ENCODE measurements at regions of chr3 and their contacts with region 1.

Region 1: GRCh38 chr3:51670823-51671733 is at the start of gene TEX264:
- DNase-seq: peak; percentile 93
- H3K4me3 ChIP-seq: peak within 1 kb of the TSS; percentile 70 to 94 (median 86)
- H3K27ac ChIP-seq: peak within 1 kb of the TSS; percentile 89 to 94 (median 92)
- H3K4me1 ChIP-seq: peaks cover 0 to 48% (median 34%) of the 10 kb centered on the region in 4 donors
- H3K27me3 ChIP-seq: no peaks in the 10 kb centered on the region
- CTCF ChIP-seq: no peak
- EP300 ChIP-seq: no peak
- POLR2A ChIP-seq: peak; percentile 59 to 63
- total RNA-seq, gene TEX264: 43.2 to 72.4 (median 70.2) TPM

Region 2: GRCh38 chr3:51384726-51385473 is 286.2 kb before region 1 on chr3 and contains the start of gene MANF:
- intact Hi-C with region 1: loop called (anchors 5 kb)
- DNase-seq: peak; percentile 99
- H3K4me3 ChIP-seq: peak within 1 kb of the TSS; percentile 59 to 91 (median 83)
- H3K27ac ChIP-seq: peak within 1 kb of the TSS; percentile 84 to 96 (median 92)
- H3K4me1 ChIP-seq: peaks cover 0 to 42% (median 35%) of the 10 kb centered on the region in 4 donors
- H3K27me3 ChIP-seq: no peaks in the 10 kb centered on the region
- CTCF ChIP-seq: no peak
- EP300 ChIP-seq: no peak
- POLR2A ChIP-seq: peak; percentile 24 to 51
- total RNA-seq, gene MANF: 12.2 to 26.2 (median 20.5) TPM

Region 3: DNA sequence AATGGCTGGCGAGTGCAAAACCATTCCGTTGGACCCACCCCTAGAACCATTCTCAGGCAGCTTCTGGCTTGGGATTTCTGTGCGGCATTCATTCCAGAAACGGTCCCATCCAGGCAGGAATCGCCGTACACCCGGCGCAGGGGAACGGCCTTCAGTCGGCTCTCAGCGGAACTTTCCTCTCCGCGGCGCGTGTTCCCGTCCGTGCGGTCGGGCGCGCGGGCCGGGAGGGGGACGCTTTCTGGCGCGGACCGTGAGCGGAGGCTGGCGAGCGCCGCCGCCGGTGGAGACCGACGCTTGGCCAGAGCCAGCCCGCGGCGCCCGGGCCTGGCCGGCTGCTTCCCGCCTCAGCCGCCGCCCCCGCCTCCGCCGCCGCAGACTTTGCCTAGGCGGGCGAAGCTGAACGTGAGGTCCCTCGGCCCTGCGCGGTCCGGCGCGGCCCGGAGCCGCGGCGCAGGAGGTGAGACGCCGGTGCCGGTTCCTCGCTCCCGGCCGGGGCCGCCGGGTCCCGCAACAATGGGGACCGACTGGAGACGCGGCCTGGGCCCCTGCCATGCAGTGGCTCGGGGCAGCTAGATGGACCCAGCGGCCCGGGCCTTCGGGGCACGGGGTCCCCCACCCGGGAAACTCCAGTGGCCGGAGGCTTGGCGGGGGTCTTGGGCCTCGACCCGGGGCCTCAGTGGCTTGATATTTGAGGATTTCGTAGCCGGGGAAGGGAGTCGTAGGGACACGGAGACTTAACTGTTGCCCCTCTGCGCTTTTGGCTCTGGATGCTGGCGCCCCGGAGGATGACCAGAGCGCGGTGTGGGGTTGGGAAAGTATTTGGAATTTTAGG is 132.4 kb before region 1 on chr3 and contains the start of gene RAD54L2:
- intact Hi-C with region 1: loop called (anchors 10 kb)
- DNase-seq: peak; percentile 88
- H3K4me3 ChIP-seq: peak within 1 kb of the TSS; percentile 90 to 94 (median 92)
- H3K27ac ChIP-seq: peak within 1 kb of the TSS; percentile 89 to 95 (median 92)
- H3K4me1 ChIP-seq: peaks cover 0 to 24% (median 21%) of the 10 kb centered on the region in 4 donors
- H3K27me3 ChIP-seq: no peaks in the 10 kb centered on the region
- CTCF ChIP-seq: peak in 1 of 4 experiments; percentile 33
- EP300 ChIP-seq: no peak
- POLR2A ChIP-seq: no peak
- total RNA-seq, gene RAD54L2: 15.7 to 33.0 (median 24.7) TPM

Region 4: GRCh38 chr3:51622868-51623267 is 48.2 kb before region 1 on chr3:
- intact Hi-C with region 1: loop called (anchors 5 kb)
- DNase-seq: no peak
- H3K4me3 ChIP-seq: no peak overlapping the region
- H3K27ac ChIP-seq: peak overlapping the region; percentile 68 to 81 (median 78)
- H3K4me1 ChIP-seq: peaks cover 0 to 54% (median 40%) of the 10 kb centered on the region in 4 donors
- H3K27me3 ChIP-seq: no peaks in the 10 kb centered on the region
- CTCF ChIP-seq: no peak
- EP300 ChIP-seq: no peak
- POLR2A ChIP-seq: no peak

Region 5: DNA sequence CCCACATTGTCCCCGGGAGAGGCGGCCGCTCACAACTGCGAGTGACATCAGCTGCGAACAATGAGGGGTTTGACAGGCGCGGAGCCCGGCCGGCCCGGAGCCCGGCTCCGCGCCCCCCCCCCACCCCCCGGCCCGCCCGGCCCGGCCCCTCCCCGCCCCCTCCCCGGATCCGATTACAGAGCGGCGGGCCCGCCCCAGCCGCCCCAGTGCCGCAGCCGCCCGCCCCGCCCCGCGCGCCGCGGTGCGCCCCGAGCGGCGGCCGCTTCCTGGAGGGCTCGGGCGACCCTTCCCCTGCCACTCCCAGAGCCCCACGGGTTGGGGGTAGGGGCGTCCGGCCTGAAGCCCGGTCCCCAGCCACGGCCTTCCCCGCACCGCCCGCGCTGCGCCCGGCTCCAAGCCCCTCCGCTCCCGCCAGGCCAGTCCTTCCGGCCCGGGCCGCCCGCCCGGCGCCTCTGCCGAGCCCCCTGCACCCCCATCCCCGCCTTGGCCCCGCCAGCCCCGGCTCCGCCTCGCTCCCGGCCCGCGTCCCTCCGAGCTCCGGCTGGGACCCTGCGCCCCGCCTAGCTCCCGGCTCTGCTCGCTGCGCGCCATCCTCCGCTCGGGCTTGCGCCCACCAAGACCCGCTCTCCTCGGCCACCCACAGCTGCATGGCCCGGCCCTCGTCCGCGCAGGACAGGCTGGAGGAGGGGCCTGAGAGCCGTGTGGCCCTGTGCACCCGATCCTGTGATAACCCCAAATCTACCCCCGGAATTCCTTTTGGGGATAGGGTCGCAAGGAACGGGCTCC is 296.5 kb after region 1 on chr3 and contains the start of gene PCBP4:
- intact Hi-C with region 1: no loop called
- DNase-seq: peak; percentile 85
- H3K4me3 ChIP-seq: peak within 1 kb of the TSS; percentile 66 to 95 (median 80)
- H3K27ac ChIP-seq: peak within 1 kb of the TSS; percentile 92 to 99 (median 94)
- H3K4me1 ChIP-seq: peaks cover 0 to 53% (median 43%) of the 10 kb centered on the region in 4 donors
- H3K27me3 ChIP-seq: no peaks in the 10 kb centered on the region
- CTCF ChIP-seq: no peak
- EP300 ChIP-seq: no peak
- POLR2A ChIP-seq: no peak
- total RNA-seq, gene PCBP4: 256 to 292 (median 268) TPM

Region 6: DNA sequence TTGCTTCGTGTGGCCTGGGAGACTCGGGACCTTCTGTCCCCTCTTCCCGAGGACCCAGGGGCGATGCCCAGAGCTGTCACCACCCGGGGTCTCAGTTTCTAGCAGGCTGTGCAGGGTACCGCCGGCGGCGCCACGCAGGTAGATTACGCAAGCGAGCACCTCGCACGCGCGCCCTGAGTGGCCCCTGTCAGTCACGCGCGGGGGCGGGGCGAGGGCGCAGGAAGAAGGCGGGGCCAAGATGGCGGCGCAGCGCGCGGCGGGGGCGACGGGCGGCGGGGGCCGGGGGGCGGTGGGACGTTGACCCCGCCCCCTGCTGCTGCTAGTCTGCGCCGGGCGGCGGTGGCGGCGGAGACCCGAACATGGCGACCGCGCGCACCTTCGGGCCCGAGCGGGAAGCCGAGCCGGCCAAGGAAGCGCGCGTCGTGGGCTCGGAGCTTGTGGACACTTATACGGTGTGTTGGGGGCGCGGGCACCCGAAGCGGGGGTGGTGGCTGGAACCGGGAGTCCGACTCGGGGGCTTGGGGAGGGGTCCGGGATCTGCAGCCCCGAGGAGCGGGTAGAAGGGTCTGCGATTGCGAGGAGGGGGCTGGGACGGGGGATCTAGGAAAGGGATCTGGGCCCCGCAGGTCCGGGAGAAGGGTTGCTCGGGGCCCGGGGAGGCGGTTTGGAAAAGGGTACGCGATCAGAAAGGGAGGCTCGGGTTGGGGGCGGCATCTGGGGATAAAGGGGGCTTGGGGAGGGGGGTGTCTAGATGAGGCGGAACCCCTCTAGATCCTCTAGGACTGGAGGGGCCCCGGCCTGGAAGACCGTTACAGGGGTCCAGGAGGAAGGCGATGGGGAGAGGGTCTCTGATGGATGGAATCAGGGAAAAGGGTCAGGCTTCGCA is 784.4 kb after region 1 on chr3 and contains the start of gene NISCH:
- intact Hi-C with region 1: loop called (anchors 5 kb)
- DNase-seq: peak; percentile 94
- H3K4me3 ChIP-seq: peak within 1 kb of the TSS; percentile 95 to 96 (median 96)
- H3K27ac ChIP-seq: peak within 1 kb of the TSS; percentile 93 to 95 (median 94)
- H3K4me1 ChIP-seq: peaks cover 0 to 31% (median 27%) of the 10 kb centered on the region in 4 donors
- H3K27me3 ChIP-seq: no peaks in the 10 kb centered on the region
- CTCF ChIP-seq: no peak
- EP300 ChIP-seq: no peak
- POLR2A ChIP-seq: peak; percentile 19 to 75
- total RNA-seq, gene NISCH: 53.5 to 113 (median 68.4) TPM

Region 7: GRCh38 chr3:53668872-53669271 is 1997.8 kb after region 1 on chr3:
- intact Hi-C with region 1: no loop called
- DNase-seq: no peak
- H3K4me3 ChIP-seq: no peak overlapping the region
- H3K27ac ChIP-seq: no peak overlapping the region
- H3K4me1 ChIP-seq: peaks cover 0 to 14% (median 0%) of the 10 kb centered on the region in 4 donors
- H3K27me3 ChIP-seq: no peaks in the 10 kb centered on the region
- CTCF ChIP-seq: no peak
- EP300 ChIP-seq: no peak
- POLR2A ChIP-seq: no peak